ENCODE measurements at regions of chr5 and their contacts with region 1.

Region 1: GRCh38 chr5:35777358-35778087 is 79.2 kb upstream of the IL7R start:
- DNase-seq: peak; percentile 39 to 91 (median 68)
- ATAC-seq: peak; percentile 41 to 67 (median 50)
- H3K4me3 ChIP-seq: peak overlapping the region in 1 of 2 donors; percentile 3
- H3K4me3 Mint-ChIP-seq: peak overlapping the region; percentile 33 to 65 (median 40)
- H3K27ac ChIP-seq: peak overlapping the region; percentile 58
- H3K27ac Mint-ChIP-seq: peak overlapping the region; percentile 89 to 95
- H3K4me1 ChIP-seq: peaks cover 16 to 37% of the 10 kb centered on the region in 2 experiments
- H3K4me1 Mint-ChIP-seq: peaks cover 73 to 77% (median 75%) of the 10 kb centered on the region in 3 donors
- H3K27me3 ChIP-seq: no peaks in the 10 kb centered on the region
- H3K27me3 Mint-ChIP-seq: no peaks in the 10 kb centered on the region

Region 2: GRCh38 chr5:35794684-35795375 is 17.3 kb after region 1 on chr5:
- CTCF ChIA-PET with region 1: interaction called, 4 to 31 read pairs
- POLR2A ChIA-PET with region 1: interaction called, 8 read pairs
- DNase-seq: no peak
- ATAC-seq: no peak
- H3K4me3 ChIP-seq: no peak overlapping the region
- H3K4me3 Mint-ChIP-seq: peak overlapping the region; percentile 17 to 42 (median 42)
- H3K27ac ChIP-seq: peak overlapping the region; percentile 21
- H3K27ac Mint-ChIP-seq: peak overlapping the region; percentile 83 to 87
- H3K4me1 ChIP-seq: peaks cover 37 to 50% of the 10 kb centered on the region in 2 experiments
- H3K4me1 Mint-ChIP-seq: peaks cover 80 to 88% (median 87%) of the 10 kb centered on the region in 3 donors
- H3K27me3 ChIP-seq: no peaks in the 10 kb centered on the region
- H3K27me3 Mint-ChIP-seq: no peaks in the 10 kb centered on the region

Region 3: DNA sequence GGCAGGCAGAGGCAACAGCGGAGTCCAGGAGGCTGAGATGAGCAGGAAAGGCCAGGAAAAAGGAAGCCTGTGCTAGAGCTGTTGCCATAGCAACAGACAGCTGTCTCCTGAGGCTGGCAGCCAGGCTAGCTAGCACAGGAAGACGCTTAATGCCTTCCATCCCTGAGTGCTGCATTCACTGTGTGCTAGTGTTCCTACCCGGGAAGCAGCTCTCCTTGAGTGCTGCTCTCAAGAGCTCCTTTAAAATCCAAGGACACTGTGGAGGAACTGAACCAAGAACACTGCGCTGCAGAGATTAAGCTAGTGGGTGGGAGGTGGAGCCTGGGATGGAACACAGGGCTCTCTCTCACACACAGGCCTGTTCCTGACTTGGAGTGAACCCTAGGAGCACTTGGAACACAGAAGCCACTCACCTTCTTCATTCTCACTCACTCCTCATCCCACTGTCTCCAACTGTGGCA is 25.7 kb after region 1 on chr5:
- CTCF ChIA-PET with region 1: interaction called, 3 to 7 read pairs
- POLR2A ChIA-PET with region 1: interaction called in 1 of 2 experiments, 12 read pairs
- DNase-seq: peak in 4 of 35 experiments; percentile 20 to 58 (median 32)
- ATAC-seq: peak; percentile 55 to 76 (median 67)
- H3K4me3 ChIP-seq: peak overlapping the region in 1 of 2 donors; percentile 33
- H3K4me3 Mint-ChIP-seq: peak overlapping the region; percentile 1 to 42 (median 14)
- H3K27ac ChIP-seq: peak overlapping the region; percentile 11
- H3K27ac Mint-ChIP-seq: peak overlapping the region; percentile 84 to 87
- H3K4me1 ChIP-seq: peaks cover 32 to 39% of the 10 kb centered on the region in 2 experiments
- H3K4me1 Mint-ChIP-seq: peaks cover 73 to 86% (median 78%) of the 10 kb centered on the region in 3 donors
- H3K27me3 ChIP-seq: no peaks in the 10 kb centered on the region
- H3K27me3 Mint-ChIP-seq: no peaks in the 10 kb centered on the region

Region 4: GRCh38 chr5:35811108-35811741 is 33.7 kb after region 1 on chr5:
- CTCF ChIA-PET with region 1: interaction called, 6 to 8 read pairs
- POLR2A ChIA-PET with region 1: interaction called, 5 to 12 read pairs
- DNase-seq: peak in 19 of 35 experiments; percentile 11 to 89 (median 32)
- ATAC-seq: peak; percentile 79 to 83 (median 82)
- H3K4me3 ChIP-seq: no peak overlapping the region
- H3K4me3 Mint-ChIP-seq: peak overlapping the region; percentile 52 to 62 (median 58)
- H3K27ac ChIP-seq: peak overlapping the region; percentile 97
- H3K27ac Mint-ChIP-seq: peak overlapping the region; percentile 94 to 96
- H3K4me1 ChIP-seq: peaks cover 49 to 58% of the 10 kb centered on the region in 2 experiments
- H3K4me1 Mint-ChIP-seq: peaks cover 65 to 73% (median 67%) of the 10 kb centered on the region in 3 donors
- H3K27me3 ChIP-seq: no peaks in the 10 kb centered on the region
- H3K27me3 Mint-ChIP-seq: no peaks in the 10 kb centered on the region

Region 5: DNA sequence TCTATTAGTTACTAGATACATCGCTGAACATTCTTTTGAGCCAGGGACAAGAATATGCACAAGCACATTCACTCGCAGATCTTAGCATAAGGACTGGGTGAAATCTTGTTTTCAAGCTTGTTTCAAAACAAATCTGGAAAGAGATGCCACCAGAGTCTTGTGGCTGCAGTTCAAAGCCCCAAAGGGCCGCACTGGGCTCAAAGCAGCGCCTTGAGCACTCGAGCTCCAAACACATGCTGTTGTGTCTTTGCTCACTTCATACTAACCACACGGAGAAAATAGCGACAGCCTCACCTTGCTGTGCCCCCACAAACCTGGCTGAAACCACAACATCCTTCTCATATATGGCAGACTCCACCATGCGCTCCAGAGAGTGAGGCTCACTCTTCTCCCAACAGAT is 45.0 kb after region 1 on chr5:
- CTCF ChIA-PET with region 1: interaction called, 4 to 10 read pairs
- POLR2A ChIA-PET with region 1: interaction called in 1 of 2 experiments, 4 read pairs
- DNase-seq: peak; percentile 34 to 87 (median 63)
- ATAC-seq: peak; percentile 81 to 86 (median 85)
- H3K4me3 ChIP-seq: peak overlapping the region; percentile 4 to 40
- H3K4me3 Mint-ChIP-seq: peak overlapping the region; percentile 55 to 69 (median 65)
- H3K27ac ChIP-seq: peak overlapping the region; percentile 79
- H3K27ac Mint-ChIP-seq: peak overlapping the region; percentile 97 to 99
- H3K4me1 ChIP-seq: peaks cover 78 to 87% of the 10 kb centered on the region in 2 experiments
- H3K4me1 Mint-ChIP-seq: peaks cover 88 to 91% (median 89%) of the 10 kb centered on the region in 3 donors
- H3K27me3 ChIP-seq: no peaks in the 10 kb centered on the region
- H3K27me3 Mint-ChIP-seq: no peaks in the 10 kb centered on the region

Region 6: DNA sequence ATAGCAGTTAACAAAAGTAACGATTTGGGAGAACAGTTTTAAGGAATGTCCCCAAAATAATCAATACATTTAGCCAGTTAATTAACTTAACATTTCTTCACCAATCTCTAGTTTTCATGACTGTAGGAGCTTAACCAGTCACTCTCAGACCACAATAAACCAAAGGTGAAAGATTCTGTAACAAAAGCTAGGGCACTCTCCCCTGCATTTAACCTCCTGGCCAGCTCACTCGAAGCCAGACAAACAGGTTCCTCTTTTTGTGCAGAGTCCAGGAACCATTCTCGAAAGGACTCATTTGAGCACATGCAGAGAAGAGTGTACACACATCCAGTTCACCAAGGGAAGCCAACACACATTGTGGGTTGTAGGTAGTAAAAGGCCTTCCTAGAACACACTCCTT is 85.6 kb after region 1 on chr5:
- CTCF ChIA-PET with region 1: interaction called, 19 to 58 read pairs
- POLR2A ChIA-PET with region 1: interaction called, 9 to 75 read pairs
- DNase-seq: peak in 1 of 35 experiments; percentile 10
- ATAC-seq: peak in 1 of 4 experiments; percentile 20
- H3K4me3 ChIP-seq: peak overlapping the region; percentile 83 to 94
- H3K4me3 Mint-ChIP-seq: peak overlapping the region; percentile 92 to 97 (median 92)
- H3K27ac ChIP-seq: peak overlapping the region; percentile 99
- H3K27ac Mint-ChIP-seq: peak overlapping the region; percentile 90 to 98
- H3K4me1 ChIP-seq: peaks cover 20 to 55% of the 10 kb centered on the region in 2 experiments
- H3K4me1 Mint-ChIP-seq: peaks cover 64 to 85% (median 76%) of the 10 kb centered on the region in 3 donors
- H3K27me3 ChIP-seq: no peaks in the 10 kb centered on the region
- H3K27me3 Mint-ChIP-seq: no peaks in the 10 kb centered on the region